ENCODE measurements at regions of chr12 and their contacts with region 1.

Region 1: DNA sequence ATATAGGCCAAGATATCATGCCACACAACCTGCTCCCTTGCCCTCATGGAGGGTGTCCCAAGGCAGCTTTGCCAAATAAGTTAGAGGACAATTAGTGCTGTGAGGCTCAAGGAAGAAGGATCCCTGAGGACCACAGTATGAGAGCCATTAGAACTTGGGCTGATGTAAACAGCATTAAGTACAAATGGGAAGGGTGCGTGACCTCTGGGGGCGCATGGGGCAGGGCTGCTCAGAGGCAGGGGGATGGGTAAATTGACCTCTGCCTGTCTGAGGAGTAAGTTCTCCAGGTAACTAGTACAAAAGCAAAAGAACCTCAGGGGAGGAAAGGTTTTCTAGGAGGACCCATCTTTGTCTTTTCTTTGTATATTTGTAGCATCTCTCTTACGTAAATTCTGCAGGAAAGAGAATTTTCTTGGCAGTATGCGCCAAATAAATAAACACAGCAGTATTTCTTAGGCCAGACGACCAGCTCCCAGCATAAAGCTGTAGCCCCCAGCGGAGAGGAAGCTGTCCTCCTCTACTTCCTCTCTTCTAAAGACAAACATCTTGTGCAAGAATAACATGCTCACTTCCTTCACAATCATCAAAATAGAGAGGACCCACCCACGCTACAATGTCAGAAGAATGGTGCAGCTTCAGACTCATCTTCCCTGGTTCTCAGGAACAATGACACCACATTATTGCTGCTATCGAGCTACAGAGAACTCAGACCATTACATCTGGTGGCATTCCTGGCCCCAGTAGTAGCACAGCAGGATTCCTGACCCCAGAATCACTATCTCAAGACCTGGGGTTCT is 16.4 kb upstream of the VWF start:
- DNase-seq: peak; percentile 92 to 97 (median 96)
- H3K4me3 ChIP-seq: peak overlapping the region in 1 of 3 experiments; percentile 24
- H3K4me3 Mint-ChIP-seq: peak overlapping the region; percentile 53 to 62
- H3K27ac ChIP-seq: peak overlapping the region; percentile 95 to 99
- H3K27ac Mint-ChIP-seq: peak overlapping the region; percentile 99 to 100 (median 99)
- H3K4me1 ChIP-seq: peaks cover 71 to 73% of the 10 kb centered on the region in 2 donors
- H3K4me1 Mint-ChIP-seq: peaks cover 64% of the 10 kb centered on the region
- H3K27me3 ChIP-seq: no peaks in the 10 kb centered on the region
- H3K27me3 Mint-ChIP-seq: peaks cover 0 to 9% (median 0%) of the 10 kb centered on the region in 3 donors
- CTCF ChIP-seq: no peak

Region 2: GRCh38 chr12:6074979-6075585 is 65.8 kb before region 1 on chr12:
- intact Hi-C with region 1: loop called in 1 of 2 experiments (anchors 2 kb)
- DNase-seq: peak; percentile 75 to 84 (median 83)
- H3K4me3 ChIP-seq: peak overlapping the region; percentile 5 to 65 (median 29)
- H3K4me3 Mint-ChIP-seq: peak overlapping the region; percentile 78 to 96
- H3K27ac ChIP-seq: peak overlapping the region in 1 of 2 donors; percentile 58
- H3K27ac Mint-ChIP-seq: peak overlapping the region in 6 of 7 donors; percentile 84 to 95 (median 91)
- H3K4me1 ChIP-seq: peaks cover 25 to 32% of the 10 kb centered on the region in 2 donors
- H3K4me1 Mint-ChIP-seq: peaks cover 42% of the 10 kb centered on the region
- H3K27me3 ChIP-seq: peaks cover 0 to 27% of the 10 kb centered on the region in 2 donors
- H3K27me3 Mint-ChIP-seq: peaks cover 32 to 44% (median 37%) of the 10 kb centered on the region in 3 donors
- CTCF ChIP-seq: peak; percentile 24

Region 3: DNA sequence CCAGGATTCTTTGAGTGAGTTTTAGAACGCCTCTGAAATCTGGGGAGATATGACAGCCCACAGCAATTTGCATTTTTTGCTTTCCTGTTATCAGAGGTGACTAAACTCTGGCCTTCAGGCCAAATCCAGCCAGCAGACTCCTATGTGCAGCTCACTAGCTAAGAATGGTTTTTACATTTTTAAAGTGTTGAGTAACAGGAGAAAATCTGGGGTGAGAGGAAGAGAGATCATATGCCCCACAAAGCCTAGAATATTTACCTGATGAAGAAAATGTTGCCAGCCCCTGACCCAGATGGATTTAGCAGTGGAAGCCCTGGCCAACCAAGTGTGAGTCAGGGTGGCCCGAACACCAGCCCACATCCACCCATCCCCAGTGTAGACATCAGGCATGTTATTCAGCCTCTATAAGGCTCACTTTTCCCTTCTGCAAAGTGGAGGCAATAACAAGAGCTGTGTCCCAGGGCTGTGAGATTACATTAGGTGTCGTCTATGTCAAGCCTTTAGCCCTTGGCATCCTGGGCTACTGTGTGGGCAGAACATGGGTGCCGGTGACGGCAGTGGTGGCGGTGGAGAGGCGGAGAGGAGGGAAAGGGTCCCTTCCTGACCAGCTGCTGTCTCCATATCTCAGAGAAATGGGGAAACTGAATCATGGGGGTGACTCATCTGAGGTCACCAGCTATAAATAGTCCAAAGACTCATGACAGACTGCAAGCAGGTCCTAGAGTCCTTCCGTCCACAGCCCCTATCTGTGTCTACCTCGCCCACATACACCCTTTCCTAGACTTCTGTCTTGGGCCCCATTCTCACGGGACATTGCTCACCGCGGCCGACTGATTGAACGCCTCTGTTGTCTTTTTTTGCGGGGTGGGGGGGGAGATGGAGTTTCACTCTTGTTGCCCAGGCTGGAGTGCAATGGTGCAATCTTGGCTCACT is 26.7 kb after region 1 on chr12:
- intact Hi-C with region 1: loop called (anchors 2 kb)
- DNase-seq: peak; percentile 98 to 100 (median 99)
- H3K4me3 ChIP-seq: peak overlapping the region in 1 of 3 experiments; percentile 18
- H3K4me3 Mint-ChIP-seq: peak overlapping the region; percentile 66 to 75
- H3K27ac ChIP-seq: peak overlapping the region; percentile 97 to 100
- H3K27ac Mint-ChIP-seq: peak overlapping the region; percentile 99 to 100 (median 100)
- H3K4me1 ChIP-seq: peaks cover 49 to 55% of the 10 kb centered on the region in 2 donors
- H3K4me1 Mint-ChIP-seq: peaks cover 60% of the 10 kb centered on the region
- H3K27me3 ChIP-seq: no peaks in the 10 kb centered on the region
- H3K27me3 Mint-ChIP-seq: no peaks in the 10 kb centered on the region
- CTCF ChIP-seq: no peak

Region 4: DNA sequence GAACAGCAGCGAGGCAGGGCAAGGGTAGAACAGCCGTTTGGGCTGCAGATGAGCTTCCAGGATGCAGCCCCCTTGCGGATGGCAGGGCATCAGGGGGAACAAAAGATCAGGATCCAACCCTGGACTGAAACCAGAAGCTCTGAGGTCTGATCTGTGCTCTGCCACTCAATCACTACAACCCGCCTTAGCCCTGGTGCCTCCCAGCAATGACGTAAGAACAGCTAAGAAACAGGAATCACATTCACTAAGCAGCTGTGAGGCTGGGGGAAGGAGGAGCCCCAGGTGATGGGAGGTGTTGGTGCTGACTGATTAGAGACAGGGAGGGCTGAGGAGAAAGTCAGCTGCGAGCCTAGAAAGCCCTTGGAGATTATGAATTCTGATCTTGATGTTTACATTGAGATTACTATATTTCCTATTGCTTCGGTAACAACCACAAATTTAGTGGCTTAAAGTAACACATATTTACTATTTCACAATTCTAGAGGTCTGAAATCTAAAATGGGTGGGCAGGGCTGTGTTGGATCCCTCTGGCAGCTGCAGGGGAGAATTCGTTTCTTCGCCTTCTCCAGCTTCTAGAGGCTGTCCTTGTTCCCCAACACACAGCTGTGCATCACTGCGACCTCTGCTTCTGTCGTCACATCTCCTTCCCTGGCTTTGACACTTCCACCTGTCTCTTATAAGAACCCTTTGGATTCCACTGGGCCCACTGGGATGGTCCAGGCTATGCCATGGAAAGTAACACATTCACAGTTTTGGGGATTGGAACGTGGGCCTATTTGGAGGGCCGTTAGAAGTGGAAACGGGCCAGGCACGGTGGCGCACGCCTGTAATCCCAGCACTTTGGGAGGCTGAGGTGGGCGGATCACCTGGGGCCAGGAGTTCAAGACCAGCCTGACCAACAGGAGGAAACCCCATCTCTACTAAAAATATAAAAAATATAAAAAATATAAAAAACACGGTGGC is 53.3 kb after region 1 on chr12:
- intact Hi-C with region 1: no loop called
- DNase-seq: peak; percentile 60 to 69 (median 66)
- H3K4me3 ChIP-seq: no peak overlapping the region
- H3K4me3 Mint-ChIP-seq: peak overlapping the region; percentile 39 to 76
- H3K27ac ChIP-seq: no peak overlapping the region
- H3K27ac Mint-ChIP-seq: peak overlapping the region in 6 of 7 donors; percentile 73 to 91 (median 82)
- H3K4me1 ChIP-seq: peaks cover 20% of the 10 kb centered on the region in 2 donors
- H3K4me1 Mint-ChIP-seq: peaks cover 49% of the 10 kb centered on the region
- H3K27me3 ChIP-seq: peaks cover under 1 to 22% of the 10 kb centered on the region in 2 donors
- H3K27me3 Mint-ChIP-seq: peaks cover 26 to 45% (median 42%) of the 10 kb centered on the region in 3 donors
- CTCF ChIP-seq: no peak

Measured in CD14-positive monocyte (primary cell).